Left ventricle myocardium inferior (tissue), 1 donor: ENCODE measurements at regions of chr2 and their contacts with region 1.

Region 1: GRCh38 chr2:219229305-219230058 is at the starts of genes ANKZF1 and ATG9A:
- DNase-seq: peak; percentile 99
- H3K4me3 ChIP-seq: peak within 1 kb of the TSS; percentile 83
- H3K27ac ChIP-seq: peak within 1 kb of the TSS; percentile 96
- H3K4me1 ChIP-seq: peaks cover 65% of the 10 kb centered on the region
- H3K27me3 ChIP-seq: no peaks in the 10 kb centered on the region
- CTCF ChIP-seq: no peak
- total RNA-seq, gene ANKZF1: 29.8 TPM
- total RNA-seq, gene ATG9A: 78.2 TPM

Region 2: DNA sequence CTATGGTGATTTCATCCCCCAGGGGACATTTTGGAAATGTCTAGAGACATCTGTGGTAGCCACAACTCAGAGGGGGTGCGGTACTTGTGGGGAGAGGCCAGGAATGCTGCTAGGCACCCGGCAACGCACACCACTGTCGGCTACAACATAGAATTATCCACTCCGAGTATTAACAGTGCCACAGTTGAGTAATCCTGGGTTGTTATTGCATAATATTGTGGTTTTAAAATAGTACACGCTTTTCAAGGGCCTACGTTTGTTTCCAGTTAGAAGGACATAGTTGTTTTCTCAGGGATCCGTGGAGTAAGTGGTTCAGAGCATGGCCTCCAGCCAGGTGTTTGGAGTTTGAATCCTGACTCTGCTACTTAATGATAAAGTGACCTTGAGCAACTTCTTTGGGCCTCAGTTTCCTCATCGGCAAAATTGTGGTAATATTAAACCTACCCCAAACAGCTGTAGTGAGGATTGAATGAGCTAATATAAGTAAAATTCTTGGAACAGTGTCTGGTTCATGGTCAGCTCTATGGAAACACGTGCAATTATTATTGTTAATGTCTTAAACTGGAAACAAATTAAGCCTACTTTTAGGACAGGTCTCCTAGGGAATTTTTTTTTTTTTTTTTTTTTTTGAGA is 423.0 kb before region 1 on chr2:
- intact Hi-C with region 1: no loop called
- DNase-seq: peak; percentile 69
- H3K4me3 ChIP-seq: peak overlapping the region; percentile 6
- H3K27ac ChIP-seq: peak overlapping the region; percentile 82
- H3K4me1 ChIP-seq: peaks cover 19% of the 10 kb centered on the region
- H3K27me3 ChIP-seq: no peaks in the 10 kb centered on the region
- CTCF ChIP-seq: no peak

Region 3: GRCh38 chr2:219160186-219161017 is 69.1 kb before region 1 on chr2 and contains the start of gene NHEJ1:
- intact Hi-C with region 1: loop called (anchors 10 kb)
- DNase-seq: peak; percentile 98
- H3K4me3 ChIP-seq: peak within 1 kb of the TSS; percentile 74
- H3K27ac ChIP-seq: peak within 1 kb of the TSS; percentile 98
- H3K4me1 ChIP-seq: peaks cover 15% of the 10 kb centered on the region
- H3K27me3 ChIP-seq: no peaks in the 10 kb centered on the region
- CTCF ChIP-seq: no peak
- total RNA-seq, gene NHEJ1: 6.4 TPM